Heart right ventricle (tissue), 16 donors: ENCODE measurements at regions of chr6 and their contacts with region 1.

Region 1: DNA sequence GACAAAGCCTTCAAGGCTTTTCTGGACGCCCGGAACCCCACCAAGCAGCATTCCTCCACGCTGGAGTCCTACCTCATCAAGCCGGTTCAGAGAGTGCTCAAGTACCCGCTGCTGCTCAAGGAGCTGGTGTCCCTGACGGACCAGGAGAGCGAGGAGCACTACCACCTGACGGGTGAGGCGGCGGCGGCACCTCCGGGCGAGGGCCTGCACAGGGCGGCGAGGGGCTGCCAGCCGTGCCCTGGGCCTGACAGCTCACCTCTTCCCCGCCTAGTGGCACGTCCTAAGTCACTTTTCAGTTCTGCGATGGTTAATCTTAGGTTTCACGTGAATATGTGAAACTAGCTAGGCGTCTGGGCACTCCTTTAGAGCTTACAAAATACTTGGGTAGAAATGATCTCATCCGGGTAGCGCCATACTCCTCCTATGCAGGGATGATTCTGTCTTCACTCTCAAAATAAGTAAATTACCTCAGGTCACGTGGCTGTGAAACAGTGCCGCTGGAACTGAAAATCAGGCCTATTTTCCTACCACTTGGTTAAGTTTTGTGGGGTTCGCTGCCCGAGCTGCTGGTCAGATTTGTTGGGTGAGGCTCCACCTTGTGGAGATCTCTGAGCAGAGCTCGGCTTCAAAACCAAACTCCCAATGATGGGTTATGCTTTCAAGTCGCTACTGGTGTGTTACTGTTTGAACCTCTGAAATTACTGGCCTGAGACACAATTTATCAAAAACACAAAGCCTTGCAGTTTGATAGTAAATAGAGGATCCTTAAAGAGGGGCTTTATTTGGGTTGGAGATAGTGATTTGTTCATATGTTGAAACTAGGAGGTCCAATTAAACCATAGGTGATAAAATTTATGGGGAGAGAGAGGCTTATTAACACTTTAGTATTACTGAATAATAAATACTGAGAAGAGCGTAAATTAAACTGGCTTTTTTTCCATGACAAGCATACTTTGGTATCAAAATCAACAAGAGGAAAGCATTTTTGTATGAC is 15.5 kb upstream of the CLDN20 start:
- DNase-seq: no peak
- ATAC-seq: peak; percentile 28 to 65 (median 49)
- H3K4me3 ChIP-seq: no peak overlapping the region
- H3K27ac ChIP-seq: peak overlapping the region in 1 of 10 donors; percentile 2
- H3K4me1 ChIP-seq: peaks cover 0 to 29% (median 9%) of the 10 kb centered on the region in 9 donors
- H3K27me3 ChIP-seq: no peaks in the 10 kb centered on the region
- CTCF ChIP-seq: peak in 8 of 9 donors; percentile 8 to 78 (median 64)

Region 2: DNA sequence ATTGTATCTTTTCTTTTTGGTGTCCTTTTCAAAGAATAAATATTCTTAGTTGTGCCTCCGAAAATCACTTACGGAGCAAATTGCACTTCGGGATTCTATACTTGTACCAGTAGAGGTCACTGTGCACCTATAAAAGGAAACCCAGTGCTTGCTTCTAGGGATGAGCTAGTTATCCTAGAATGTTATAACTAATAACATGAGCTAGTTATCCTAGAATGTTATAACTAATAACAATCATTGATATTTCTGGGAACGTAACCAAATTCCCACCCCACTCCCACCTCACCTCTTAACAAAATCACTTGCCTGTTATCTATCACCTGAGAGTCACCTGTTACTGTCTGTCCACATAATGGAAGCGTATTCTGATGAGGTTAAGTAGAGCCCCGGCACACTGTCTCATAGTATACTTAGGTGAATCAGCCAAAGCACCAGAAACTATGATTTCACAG is 380.1 kb before region 1 on chr6:
- intact Hi-C with region 1: loop called in 1 of 10 experiments (anchors 10 kb)
- DNase-seq: no peak
- ATAC-seq: peak in 3 of 8 donors; percentile 34 to 60 (median 46)
- H3K4me3 ChIP-seq: no peak overlapping the region
- H3K27ac ChIP-seq: no peak overlapping the region
- H3K4me1 ChIP-seq: peaks cover 0 to 27% (median 4%) of the 10 kb centered on the region in 9 donors
- H3K27me3 ChIP-seq: no peaks in the 10 kb centered on the region
- CTCF ChIP-seq: peak; percentile 51 to 86 (median 76)

Region 3: DNA sequence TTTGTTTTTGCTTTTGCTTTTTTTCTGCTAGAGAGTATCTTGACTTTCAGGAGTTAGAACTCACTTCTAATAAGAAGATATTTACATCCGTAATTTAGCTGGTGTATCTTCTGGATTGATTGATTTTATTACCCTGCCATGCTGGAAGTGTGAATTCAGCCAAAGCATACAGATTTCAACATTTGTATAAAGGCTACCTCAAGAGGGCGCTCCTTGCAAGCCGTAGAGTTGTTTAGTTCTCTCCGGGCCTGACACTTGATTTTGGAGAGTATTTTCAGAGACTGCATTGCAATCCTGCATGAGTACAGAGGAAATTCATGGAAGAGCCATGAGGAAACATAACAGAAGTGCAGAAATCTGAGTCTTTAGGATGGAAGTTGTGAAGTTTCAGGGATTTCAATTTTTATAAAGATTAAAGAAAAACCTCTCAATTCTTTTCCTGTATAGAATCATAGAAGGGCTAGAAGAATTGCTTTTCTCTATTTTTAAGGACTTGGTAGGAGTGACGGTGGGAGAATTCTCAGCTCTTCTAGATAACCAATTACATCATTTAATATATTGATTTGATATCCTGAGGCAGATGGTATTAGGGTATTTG is 319.9 kb before region 1 on chr6:
- intact Hi-C with region 1: loop called in 3 of 10 experiments (anchors 5 to 10 kb)
- DNase-seq: peak in 1 of 2 donors; percentile 58
- ATAC-seq: peak in 6 of 8 donors; percentile 49 to 71 (median 64)
- H3K4me3 ChIP-seq: no peak overlapping the region
- H3K27ac ChIP-seq: no peak overlapping the region
- H3K4me1 ChIP-seq: peaks cover 0 to 29% (median 9%) of the 10 kb centered on the region in 9 donors
- H3K27me3 ChIP-seq: no peaks in the 10 kb centered on the region
- CTCF ChIP-seq: peak; percentile 55 to 88 (median 80)

Region 4: DNA sequence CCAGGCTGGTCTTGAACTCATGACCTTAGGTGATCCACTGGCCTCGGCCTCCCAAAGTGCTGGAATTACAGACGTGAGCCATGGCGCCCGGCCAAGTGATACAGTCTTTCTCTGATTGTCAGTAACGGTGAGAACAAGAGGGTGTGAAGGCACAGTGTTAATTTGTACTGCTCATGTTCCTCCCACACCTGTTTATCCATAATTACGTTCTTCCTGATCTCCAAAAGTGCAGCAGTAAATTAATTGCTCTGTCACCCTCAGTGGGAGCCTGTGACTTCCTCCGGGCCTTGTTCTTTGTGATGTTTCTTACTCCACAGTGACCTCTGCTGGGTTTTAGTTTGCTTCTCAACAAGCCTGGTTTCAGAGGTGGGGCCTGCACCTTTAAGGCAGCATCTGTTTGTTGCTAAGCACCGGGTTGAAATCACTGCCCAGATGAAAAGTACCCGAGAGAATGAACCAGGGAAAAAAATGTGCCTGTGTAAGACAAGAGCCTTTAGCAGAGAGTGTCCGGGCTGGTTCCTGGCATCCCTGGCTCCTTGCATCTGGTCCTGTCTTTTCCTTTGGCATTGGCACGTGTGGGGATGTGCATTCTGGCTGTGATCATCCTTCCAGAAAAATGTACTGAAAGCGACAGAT is 73.6 kb before region 1 on chr6:
- intact Hi-C with region 1: loop called in 8 of 10 experiments (anchors 1 to 10 kb)
- DNase-seq: peak; percentile 23 to 75
- ATAC-seq: peak; percentile 73 to 88 (median 82)
- H3K4me3 ChIP-seq: no peak overlapping the region
- H3K27ac ChIP-seq: no peak overlapping the region
- H3K4me1 ChIP-seq: peaks cover 0 to 24% (median 13%) of the 10 kb centered on the region in 9 donors
- H3K27me3 ChIP-seq: no peaks in the 10 kb centered on the region
- CTCF ChIP-seq: peak; percentile 27 to 79 (median 70)

Region 5: DNA sequence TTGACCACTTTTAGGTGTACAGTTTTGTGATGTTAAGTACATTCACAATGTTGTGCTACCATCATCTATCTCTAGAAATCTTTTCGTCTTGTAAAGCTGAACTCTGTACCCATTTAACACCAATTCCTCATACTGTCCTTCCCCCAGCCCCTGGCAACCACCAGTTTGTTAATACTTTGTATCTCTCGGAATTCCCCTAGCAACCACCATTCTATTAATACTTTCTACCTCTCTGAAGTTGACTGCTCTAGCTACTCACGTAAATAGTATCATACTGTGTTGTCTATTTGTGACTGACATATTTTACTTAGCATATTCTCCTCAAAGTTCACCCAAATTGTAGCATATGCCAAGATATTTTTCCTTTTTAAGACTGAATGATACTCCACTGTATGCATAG is 66.8 kb before region 1 on chr6:
- intact Hi-C with region 1: loop called in 9 of 10 experiments (anchors 1 to 10 kb)
- DNase-seq: no peak
- ATAC-seq: no peak
- H3K4me3 ChIP-seq: no peak overlapping the region
- H3K27ac ChIP-seq: no peak overlapping the region
- H3K4me1 ChIP-seq: peaks cover 0 to 9% (median 4%) of the 10 kb centered on the region in 9 donors
- H3K27me3 ChIP-seq: no peaks in the 10 kb centered on the region
- CTCF ChIP-seq: no peak

Region 6: GRCh38 chr6:155201461-155202226 is 46.7 kb before region 1 on chr6:
- intact Hi-C with region 1: loop called in 1 of 10 experiments (anchors 5 kb)
- DNase-seq: no peak
- ATAC-seq: no peak
- H3K4me3 ChIP-seq: no peak overlapping the region
- H3K27ac ChIP-seq: no peak overlapping the region
- H3K4me1 ChIP-seq: peaks cover 0 to 8% (median 0%) of the 10 kb centered on the region in 9 donors
- H3K27me3 ChIP-seq: no peaks in the 10 kb centered on the region
- CTCF ChIP-seq: no peak